AG04450 (cell line): ENCODE measurements at regions of chr2 and their contacts with region 1.

Region 1: DNA sequence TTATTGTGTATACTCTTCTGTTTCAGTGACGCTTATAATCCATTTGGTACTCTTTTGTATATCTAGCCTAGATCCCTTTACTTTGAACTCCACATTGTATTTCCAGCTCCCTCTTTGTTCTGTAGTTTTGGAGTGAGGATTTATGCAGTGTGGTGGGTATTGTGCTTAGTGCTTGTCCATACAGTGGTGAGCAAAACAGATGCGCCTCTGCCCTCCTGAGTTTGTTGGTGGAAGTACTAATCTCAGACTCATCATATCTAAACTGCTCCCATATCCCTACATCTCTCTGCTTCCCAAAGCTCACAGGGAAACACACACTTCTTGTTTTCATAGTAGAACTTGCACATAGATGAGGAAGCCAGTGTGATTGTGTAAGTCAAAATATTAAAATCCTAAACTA is 12.1 kb downstream of the PTCD3 start:
- DNase-seq: no peak
- H3K4me3 ChIP-seq: no peak overlapping the region
- H3K27ac ChIP-seq: no peak overlapping the region
- H3K27me3 ChIP-seq: no peaks in the 10 kb centered on the region
- CTCF ChIP-seq: no peak

Region 2: GRCh38 chr2:86105252-86105968 is 12.7 kb before region 1 on chr2 and contains the start of gene POLR1A:
- CTCF ChIA-PET with region 1: no interaction called
- POLR2A ChIA-PET with region 1: interaction called, 10 read pairs
- DNase-seq: peak; percentile 86
- H3K4me3 ChIP-seq: peak within 1 kb of the TSS; percentile 93
- H3K27ac ChIP-seq: peak within 1 kb of the TSS; percentile 69
- H3K27me3 ChIP-seq: no peaks in the 10 kb centered on the region
- CTCF ChIP-seq: peak; percentile 23
- polyA plus RNA-seq, gene POLR1A: 11.1 and 11.9 TPM in 2 replicates

Region 3: DNA sequence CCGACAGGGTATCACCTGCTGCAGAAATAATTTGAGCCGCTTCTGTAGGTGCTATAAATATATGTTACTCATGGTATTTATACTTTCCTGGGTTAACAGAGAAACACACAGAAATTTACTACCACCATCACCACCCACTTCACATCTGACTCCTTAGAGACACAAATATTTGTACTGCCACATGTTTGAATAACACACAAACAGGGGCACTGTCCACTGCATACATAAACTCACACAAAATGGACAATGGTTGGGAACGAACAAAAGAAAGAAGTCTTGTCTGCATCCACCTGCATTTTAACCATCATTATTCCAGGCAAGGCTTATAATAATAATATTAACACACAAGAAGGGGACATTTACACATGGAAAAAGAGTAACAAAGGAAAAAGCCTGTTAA is 53.2 kb after region 1 on chr2:
- CTCF ChIA-PET with region 1: interaction called, 10 read pairs
- POLR2A ChIA-PET with region 1: no interaction called
- DNase-seq: no peak
- H3K4me3 ChIP-seq: no peak overlapping the region
- H3K27ac ChIP-seq: no peak overlapping the region
- H3K27me3 ChIP-seq: no peaks in the 10 kb centered on the region
- CTCF ChIP-seq: no peak